ENCODE measurements at regions of chr3 and their contacts with region 1.

Region 1: DNA sequence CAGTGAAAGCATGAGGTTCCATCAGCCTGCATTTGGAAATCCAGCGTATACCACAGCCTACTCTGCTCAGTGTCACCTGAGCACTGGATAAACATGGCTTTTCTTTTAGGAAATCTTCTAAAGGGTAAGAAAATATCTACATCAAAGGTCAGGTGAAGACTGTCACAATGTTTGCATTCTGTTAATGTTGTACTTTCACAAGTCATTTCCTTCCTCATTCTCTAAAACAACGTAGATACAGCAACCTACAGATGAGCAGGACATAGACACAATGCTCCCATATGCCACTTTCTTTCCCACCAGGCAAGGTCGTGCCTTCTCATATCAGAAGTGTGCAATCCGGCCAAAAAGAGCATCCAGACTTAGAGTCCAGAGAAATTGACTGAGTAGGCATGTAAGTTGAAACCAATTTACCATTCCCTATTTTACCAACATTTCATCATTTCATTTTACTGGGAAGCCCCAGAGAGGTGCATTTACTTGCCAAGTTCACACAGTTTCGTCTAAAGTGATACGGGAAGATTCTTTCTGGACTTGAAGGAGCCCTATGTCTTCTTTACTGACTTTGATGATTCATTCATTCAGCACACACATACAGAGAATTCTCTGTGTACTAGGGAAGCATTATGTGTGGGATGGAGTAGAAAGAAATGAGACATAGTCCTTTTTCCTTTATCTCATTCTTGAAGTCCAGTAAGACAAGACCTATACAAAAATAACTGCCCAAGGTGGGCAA is 30.6 kb upstream of the LPP start:
- DNase-seq: peak; percentile 64 to 65
- H3K4me3 ChIP-seq: no peak overlapping the region
- H3K4me3 Mint-ChIP-seq: peak overlapping the region; percentile 58
- H3K27ac Mint-ChIP-seq: peak overlapping the region; percentile 85
- H3K4me1 ChIP-seq: peaks cover 44% of the 10 kb centered on the region
- H3K4me1 Mint-ChIP-seq: peaks cover 38% of the 10 kb centered on the region
- H3K27me3 ChIP-seq: no peaks in the 10 kb centered on the region
- H3K27me3 Mint-ChIP-seq: no peaks in the 10 kb centered on the region
- CTCF ChIP-seq: no peak

Region 2: DNA sequence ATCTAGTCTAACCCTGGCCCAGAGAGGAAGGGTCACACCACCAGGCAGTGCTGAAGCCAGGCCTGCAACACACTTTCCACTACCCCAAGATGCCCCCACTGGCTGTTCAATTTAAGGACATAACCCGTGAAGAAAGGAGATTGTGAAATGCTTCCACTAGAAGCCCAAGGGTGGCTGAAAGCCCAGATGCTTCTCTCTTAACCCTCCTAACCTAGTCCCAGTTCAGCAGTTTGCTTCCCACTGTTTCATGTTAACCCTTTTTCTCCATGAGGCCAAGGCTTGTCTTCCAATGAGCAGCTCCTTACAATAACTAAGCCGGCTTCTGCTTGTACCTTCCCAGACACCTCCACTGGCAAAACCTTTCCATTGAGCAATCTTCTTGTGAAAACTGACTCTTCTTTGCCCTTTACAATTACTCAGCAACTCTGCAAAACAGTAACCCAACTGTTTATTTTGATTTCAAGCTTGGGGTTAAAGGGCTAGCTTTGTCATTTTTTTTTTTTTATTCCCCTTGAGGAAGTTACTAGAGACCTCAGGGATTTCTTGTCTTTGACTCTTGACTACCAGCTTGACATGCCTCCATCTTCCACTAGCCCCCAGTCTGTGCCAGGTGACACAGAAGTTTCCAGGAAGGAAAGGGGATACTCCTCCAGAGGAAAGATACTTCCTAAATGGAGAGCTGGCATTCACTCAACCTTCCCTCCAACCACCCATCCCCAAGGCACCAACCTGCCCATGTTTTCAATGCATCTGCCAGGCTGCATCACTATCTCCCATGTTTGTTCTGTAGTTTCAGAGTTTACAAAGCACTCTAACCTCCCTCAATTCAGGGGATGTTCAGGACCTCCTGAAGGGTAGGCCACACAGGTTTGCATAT is 168.0 kb before region 1 on chr3:
- CTCF ChIA-PET with region 1: no interaction called
- POLR2A ChIA-PET with region 1: no interaction called
- intact Hi-C with region 1: no loop called
- DNase-seq: no peak
- H3K4me3 ChIP-seq: no peak overlapping the region
- H3K4me3 Mint-ChIP-seq: no peak overlapping the region
- H3K27ac Mint-ChIP-seq: peak overlapping the region; percentile 6
- H3K4me1 ChIP-seq: peaks cover 15% of the 10 kb centered on the region
- H3K4me1 Mint-ChIP-seq: peaks cover 19% of the 10 kb centered on the region
- H3K27me3 ChIP-seq: no peaks in the 10 kb centered on the region
- H3K27me3 Mint-ChIP-seq: no peaks in the 10 kb centered on the region
- CTCF ChIP-seq: no peak

Region 3: GRCh38 chr3:188064831-188065493 is 58.4 kb before region 1 on chr3:
- CTCF ChIA-PET with region 1: no interaction called
- POLR2A ChIA-PET with region 1: no interaction called
- intact Hi-C with region 1: loop called (anchors 2 kb)
- DNase-seq: peak in 1 of 2 experiments; percentile 37
- H3K4me3 ChIP-seq: no peak overlapping the region
- H3K4me3 Mint-ChIP-seq: no peak overlapping the region
- H3K27ac Mint-ChIP-seq: peak overlapping the region; percentile 63
- H3K4me1 ChIP-seq: peaks cover 43% of the 10 kb centered on the region
- H3K4me1 Mint-ChIP-seq: peaks cover 23% of the 10 kb centered on the region
- H3K27me3 ChIP-seq: no peaks in the 10 kb centered on the region
- H3K27me3 Mint-ChIP-seq: no peaks in the 10 kb centered on the region
- CTCF ChIP-seq: no peak

Region 4: DNA sequence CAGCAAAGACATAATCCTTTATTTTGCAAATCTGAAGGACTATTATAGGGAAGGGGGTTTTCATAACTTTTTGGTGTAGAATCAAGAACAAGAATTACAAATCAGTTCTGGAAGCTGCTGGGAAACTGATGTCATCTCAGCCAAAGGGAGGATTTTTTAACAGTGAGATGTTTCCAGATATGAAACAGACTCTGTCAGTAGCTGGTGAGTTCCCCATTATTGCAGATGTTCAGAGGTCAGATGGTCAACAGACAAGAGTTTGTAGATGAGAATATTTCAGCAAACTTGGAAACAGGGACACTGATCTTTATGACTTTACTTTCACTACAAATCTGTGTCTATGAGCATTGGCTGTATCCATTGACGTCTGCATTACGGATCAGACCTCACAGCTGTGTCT is 41.3 kb before region 1 on chr3:
- CTCF ChIA-PET with region 1: no interaction called
- POLR2A ChIA-PET with region 1: no interaction called
- intact Hi-C with region 1: loop called (anchors 1 kb)
- DNase-seq: no peak
- H3K4me3 ChIP-seq: no peak overlapping the region
- H3K4me3 Mint-ChIP-seq: no peak overlapping the region
- H3K27ac Mint-ChIP-seq: no peak overlapping the region
- H3K4me1 ChIP-seq: peaks cover 34% of the 10 kb centered on the region
- H3K4me1 Mint-ChIP-seq: peaks cover 47% of the 10 kb centered on the region
- H3K27me3 ChIP-seq: no peaks in the 10 kb centered on the region
- H3K27me3 Mint-ChIP-seq: no peaks in the 10 kb centered on the region
- CTCF ChIP-seq: no peak

Region 5: GRCh38 chr3:188102861-188103547 is 20.3 kb before region 1 on chr3:
- CTCF ChIA-PET with region 1: no interaction called
- POLR2A ChIA-PET with region 1: no interaction called
- intact Hi-C with region 1: loop called (anchors 2 kb)
- DNase-seq: no peak
- H3K4me3 ChIP-seq: no peak overlapping the region
- H3K4me3 Mint-ChIP-seq: no peak overlapping the region
- H3K27ac Mint-ChIP-seq: no peak overlapping the region
- H3K4me1 ChIP-seq: peaks cover 12% of the 10 kb centered on the region
- H3K4me1 Mint-ChIP-seq: peaks cover 6% of the 10 kb centered on the region
- H3K27me3 ChIP-seq: no peaks in the 10 kb centered on the region
- H3K27me3 Mint-ChIP-seq: no peaks in the 10 kb centered on the region
- CTCF ChIP-seq: no peak

Region 6: DNA sequence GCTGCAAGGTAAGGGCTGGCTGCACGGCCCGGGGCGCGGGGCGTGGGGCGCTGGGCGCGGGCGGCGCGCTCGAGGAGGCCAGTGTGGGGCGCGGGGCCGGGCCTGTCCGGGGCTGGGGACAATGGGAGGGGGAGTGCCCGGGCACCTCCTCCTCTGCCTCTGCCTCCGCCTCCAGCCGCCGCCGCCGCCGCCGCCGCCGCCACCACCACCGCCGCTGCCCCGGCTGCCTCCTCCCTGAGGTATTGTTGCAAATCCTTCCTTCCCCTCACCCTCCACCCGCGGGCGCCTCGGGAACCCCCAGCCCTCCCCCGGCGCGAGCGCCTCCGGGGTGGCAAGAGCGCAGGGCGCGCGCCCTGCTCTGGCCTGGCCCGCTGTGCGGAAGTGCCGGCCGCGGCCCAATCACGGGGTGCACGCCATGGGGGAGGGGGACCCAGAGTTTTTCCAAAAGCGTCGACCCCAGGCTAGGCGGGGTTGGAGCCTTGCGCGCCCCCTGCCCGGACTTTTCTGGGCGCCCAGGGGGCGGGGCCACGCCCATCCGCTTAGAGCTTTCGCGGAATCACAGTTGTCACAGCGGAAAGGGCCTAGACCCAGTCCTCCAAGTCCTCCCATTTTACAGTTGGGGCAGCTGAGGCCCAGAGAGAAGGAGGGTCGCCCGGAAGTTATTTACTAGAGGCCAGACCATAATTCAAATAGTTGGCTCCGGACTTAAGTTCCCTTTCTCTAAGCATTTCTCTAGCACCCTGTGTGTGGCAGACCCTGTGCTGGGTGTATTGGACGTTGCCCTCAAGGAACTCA is 30.9 kb after region 1 on chr3 and contains the start of gene LPP:
- CTCF ChIA-PET with region 1: no interaction called
- POLR2A ChIA-PET with region 1: interaction called, 6 read pairs
- intact Hi-C with region 1: loop called (anchors 1 kb)
- DNase-seq: peak; percentile 79 to 86
- H3K4me3 ChIP-seq: peak within 1 kb of the TSS; percentile 68
- H3K4me3 Mint-ChIP-seq: peak within 1 kb of the TSS; percentile 84
- H3K27ac Mint-ChIP-seq: peak within 1 kb of the TSS; percentile 89
- H3K4me1 ChIP-seq: peaks cover 66% of the 10 kb centered on the region
- H3K4me1 Mint-ChIP-seq: peaks cover 48% of the 10 kb centered on the region
- H3K27me3 ChIP-seq: no peaks in the 10 kb centered on the region
- H3K27me3 Mint-ChIP-seq: no peaks in the 10 kb centered on the region
- CTCF ChIP-seq: peak in 1 of 2 experiments; percentile 27
- total RNA-seq, gene LPP: 120 and 147 TPM in 2 replicates

Region 7: GRCh38 chr3:188212308-188212969 is 89.1 kb after region 1 on chr3:
- CTCF ChIA-PET with region 1: no interaction called
- POLR2A ChIA-PET with region 1: no interaction called
- intact Hi-C with region 1: loop called (anchors 1 kb)
- DNase-seq: peak; percentile 55 to 60
- H3K4me3 ChIP-seq: no peak overlapping the region
- H3K4me3 Mint-ChIP-seq: peak overlapping the region; percentile 44
- H3K27ac Mint-ChIP-seq: peak overlapping the region; percentile 79
- H3K4me1 ChIP-seq: peaks cover 60% of the 10 kb centered on the region
- H3K4me1 Mint-ChIP-seq: peaks cover 35% of the 10 kb centered on the region
- H3K27me3 ChIP-seq: no peaks in the 10 kb centered on the region
- H3K27me3 Mint-ChIP-seq: no peaks in the 10 kb centered on the region
- CTCF ChIP-seq: no peak

Region 8: DNA sequence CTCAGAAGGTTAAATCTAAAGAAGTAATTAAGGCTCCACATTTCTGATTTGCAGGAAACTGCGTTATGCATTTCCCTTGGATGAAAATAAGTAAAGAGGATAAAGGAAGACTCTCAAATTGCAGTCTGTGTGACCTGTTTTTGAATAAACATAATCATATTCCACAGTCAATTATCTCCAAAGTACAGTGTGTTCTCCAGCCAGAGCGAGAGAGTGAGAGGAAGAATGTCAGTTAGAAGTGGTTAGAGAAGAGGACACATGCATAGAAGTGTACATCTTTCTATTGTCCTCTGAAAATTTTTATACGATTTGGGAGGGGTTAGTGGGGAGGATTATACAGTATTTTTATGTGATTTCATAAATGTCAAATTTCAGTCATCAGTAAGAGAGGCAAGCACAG is 517.7 kb after region 1 on chr3:
- CTCF ChIA-PET with region 1: no interaction called
- POLR2A ChIA-PET with region 1: no interaction called
- intact Hi-C with region 1: no loop called
- DNase-seq: no peak
- H3K4me3 ChIP-seq: no peak overlapping the region
- H3K4me3 Mint-ChIP-seq: no peak overlapping the region
- H3K27ac Mint-ChIP-seq: no peak overlapping the region
- H3K4me1 ChIP-seq: no peaks in the 10 kb centered on the region
- H3K4me1 Mint-ChIP-seq: no peaks in the 10 kb centered on the region
- H3K27me3 ChIP-seq: no peaks in the 10 kb centered on the region
- H3K27me3 Mint-ChIP-seq: no peaks in the 10 kb centered on the region
- CTCF ChIP-seq: no peak

Measured in Caco-2 (cell line).